GM10248 (cell line): ENCODE measurements at regions of chr18 and their contacts with region 1.

Region 1: GRCh38 chr18:35371412-35372195 is 5.5 kb downstream of the ZNF396 start:
- DNase-seq: no peak
- CTCF ChIP-seq: no peak

Region 2: DNA sequence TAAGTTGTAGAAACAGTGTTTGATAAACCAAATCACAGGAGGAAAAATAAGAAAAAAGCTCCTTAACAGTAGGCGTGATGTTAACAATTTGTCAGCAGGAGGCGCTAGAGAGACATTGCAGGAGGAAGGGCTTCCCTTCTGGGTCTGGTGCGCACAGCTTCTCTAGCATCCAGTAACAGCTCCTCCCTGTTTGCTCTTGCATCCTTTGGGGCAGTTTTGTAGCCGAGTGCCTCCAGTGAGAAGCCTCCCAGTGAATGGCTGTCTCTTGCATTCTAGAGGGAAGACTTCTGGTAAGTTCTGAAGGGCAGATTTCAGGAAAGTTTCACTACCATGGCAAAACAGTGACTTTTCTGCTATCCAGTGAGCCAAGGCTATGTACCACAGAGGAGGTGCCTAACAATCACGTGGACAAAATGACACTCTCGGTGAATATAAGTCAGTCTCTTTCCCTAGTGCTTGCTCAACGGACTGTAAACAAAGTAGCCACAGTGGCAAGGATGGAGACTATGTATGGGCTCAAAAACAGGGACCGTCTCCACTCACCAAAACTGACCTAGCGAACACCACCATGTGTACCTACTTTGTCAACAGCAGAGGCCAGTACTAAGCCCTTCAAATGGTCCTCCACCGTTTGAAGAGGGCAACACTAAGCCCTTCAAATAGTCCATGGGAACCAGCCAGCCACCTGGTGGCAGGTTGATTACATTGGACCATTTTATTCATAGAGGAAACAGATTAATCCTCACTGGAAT is 15.2 kb after region 1 on chr18:
- CTCF ChIA-PET with region 1: interaction called, 30 read pairs
- POLR2A ChIA-PET with region 1: no interaction called
- DNase-seq: peak; percentile 70
- CTCF ChIP-seq: peak; percentile 83